Sigmoid colon (tissue), 7 donors: ENCODE measurements at regions of chr18 and their contacts with region 1.

Region 1: GRCh38 chr18:54983041-54983686 is 23.9 kb upstream of the CCDC68 start:
- DNase-seq: no peak
- H3K4me3 ChIP-seq: no peak overlapping the region
- H3K27ac ChIP-seq: no peak overlapping the region
- H3K4me1 ChIP-seq: no peaks in the 10 kb centered on the region
- H3K27me3 ChIP-seq: no peaks in the 10 kb centered on the region
- CTCF ChIP-seq: peak in 3 of 4 experiments; percentile 41 to 64 (median 62)
- EP300 ChIP-seq: no peak
- POLR2A ChIP-seq: no peak

Region 2: GRCh38 chr18:54444319-54444914 is 538.7 kb before region 1 on chr18:
- intact Hi-C with region 1: loop called (anchors 10 kb)
- DNase-seq: no peak
- H3K4me3 ChIP-seq: no peak overlapping the region
- H3K27ac ChIP-seq: no peak overlapping the region
- H3K4me1 ChIP-seq: no peaks in the 10 kb centered on the region
- H3K27me3 ChIP-seq: peaks cover 0 to 3% (median 0%) of the 10 kb centered on the region in 3 donors
- CTCF ChIP-seq: peak in 2 of 4 experiments; percentile 34 to 35
- EP300 ChIP-seq: no peak
- POLR2A ChIP-seq: no peak